Naive thymus-derived CD4-positive, alpha-beta T cell (primary cell): ENCODE measurements at regions of chr21 and their contacts with region 1.

Region 1: DNA sequence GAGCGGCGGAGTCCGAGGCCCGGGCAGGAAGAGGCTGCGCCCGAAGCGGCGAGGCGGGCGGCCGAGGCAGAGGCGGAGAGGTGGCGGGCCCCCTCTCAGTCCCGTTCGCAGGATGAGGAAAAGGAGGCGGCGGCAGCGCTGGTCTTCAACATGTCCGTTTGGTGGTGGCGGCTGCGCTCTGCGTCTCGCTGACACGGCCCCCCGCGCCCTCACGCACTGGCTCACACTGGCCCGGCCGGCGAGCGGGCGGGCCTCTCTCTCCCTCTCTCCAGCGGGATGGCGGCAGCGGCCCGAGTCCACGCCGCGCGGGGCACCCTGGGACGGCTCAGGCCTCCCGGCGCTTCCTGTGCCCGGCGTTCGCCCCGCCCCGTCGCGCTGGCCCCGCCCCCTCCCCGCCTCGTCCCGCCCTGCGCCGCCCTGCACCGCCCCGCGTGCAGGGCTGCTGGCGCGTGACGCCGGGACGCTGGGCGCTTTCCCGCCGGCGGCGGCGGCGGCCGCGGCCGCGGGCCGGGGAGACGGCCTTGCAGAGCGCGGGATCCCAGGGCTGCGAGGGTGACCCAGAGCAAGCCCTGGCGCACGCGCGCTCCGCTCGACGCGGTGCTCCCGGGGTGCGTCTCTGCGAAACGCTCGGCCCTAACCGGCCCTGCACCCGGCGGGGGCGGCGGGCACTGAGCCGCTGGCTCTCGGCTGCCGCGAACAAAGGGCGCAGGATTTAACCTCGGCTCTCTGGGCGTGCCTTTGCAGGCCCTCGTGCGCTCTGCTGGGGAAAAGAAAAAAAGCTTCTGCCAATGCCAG is at the start of gene SCAF4:
- DNase-seq: peak; percentile 64 to 86 (median 72)
- ATAC-seq: peak; percentile 95
- H3K4me3 ChIP-seq: peak within 1 kb of the TSS; percentile 80
- H3K4me3 Mint-ChIP-seq: peak within 1 kb of the TSS in 6 of 10 donors; percentile 67 to 94 (median 90)
- H3K27ac ChIP-seq: peak within 1 kb of the TSS; percentile 95
- H3K27ac Mint-ChIP-seq: peak within 1 kb of the TSS; percentile 32 to 96 (median 83)
- H3K4me1 ChIP-seq: peaks cover 24 to 39% of the 10 kb centered on the region in 2 donors
- H3K4me1 Mint-ChIP-seq: peaks cover 13 to 19% (median 15%) of the 10 kb centered on the region in 7 donors
- H3K27me3 ChIP-seq: no peaks in the 10 kb centered on the region
- H3K27me3 Mint-ChIP-seq: peaks cover 0 to 2% (median 0%) of the 10 kb centered on the region in 5 donors
- total RNA-seq, gene SCAF4: 54.8 to 69.7 (median 64.7) TPM

Region 2: DNA sequence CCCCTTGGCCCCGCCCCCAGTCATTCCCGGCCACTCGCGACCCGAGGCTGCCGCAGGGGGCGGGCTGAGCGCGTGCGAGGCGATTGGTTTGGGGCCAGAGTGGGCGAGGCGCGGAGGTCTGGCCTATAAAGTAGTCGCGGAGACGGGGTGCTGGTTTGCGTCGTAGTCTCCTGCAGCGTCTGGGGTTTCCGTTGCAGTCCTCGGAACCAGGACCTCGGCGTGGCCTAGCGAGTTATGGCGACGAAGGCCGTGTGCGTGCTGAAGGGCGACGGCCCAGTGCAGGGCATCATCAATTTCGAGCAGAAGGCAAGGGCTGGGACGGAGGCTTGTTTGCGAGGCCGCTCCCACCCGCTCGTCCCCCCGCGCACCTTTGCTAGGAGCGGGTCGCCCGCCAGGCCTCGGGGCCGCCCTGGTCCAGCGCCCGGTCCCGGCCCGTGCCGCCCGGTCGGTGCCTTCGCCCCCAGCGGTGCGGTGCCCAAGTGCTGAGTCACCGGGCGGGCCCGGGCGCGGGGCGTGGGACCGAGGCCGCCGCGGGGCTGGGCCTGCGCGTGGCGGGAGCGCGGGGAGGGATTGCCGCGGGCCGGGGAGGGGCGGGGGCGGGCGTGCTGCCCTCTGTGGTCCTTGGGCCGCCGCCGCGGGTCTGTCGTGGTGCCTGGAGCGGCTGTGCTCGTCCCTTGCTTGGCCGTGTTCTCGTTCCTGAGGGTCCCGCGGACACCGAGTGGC is 72.3 kb before region 1 on chr21 and contains the start of gene SOD1:
- CTCF ChIA-PET with region 1: no interaction called
- POLR2A ChIA-PET with region 1: interaction called, 3 read pairs
- intact Hi-C with region 1: loop called (anchors 1 kb)
- DNase-seq: peak in 8 of 9 donors; percentile 20 to 98 (median 97)
- ATAC-seq: peak; percentile 97
- H3K4me3 ChIP-seq: peak within 1 kb of the TSS; percentile 79
- H3K4me3 Mint-ChIP-seq: peak within 1 kb of the TSS; percentile 95 to 100 (median 100)
- H3K27ac ChIP-seq: peak within 1 kb of the TSS; percentile 88
- H3K27ac Mint-ChIP-seq: peak within 1 kb of the TSS; percentile 97 to 100 (median 98)
- H3K4me1 ChIP-seq: peaks cover 15 to 50% of the 10 kb centered on the region in 2 donors
- H3K4me1 Mint-ChIP-seq: peaks cover 40 to 80% (median 68%) of the 10 kb centered on the region in 7 donors
- H3K27me3 ChIP-seq: no peaks in the 10 kb centered on the region
- H3K27me3 Mint-ChIP-seq: no peaks in the 10 kb centered on the region
- total RNA-seq, gene SOD1: 110 to 218 (median 182) TPM

Region 3: GRCh38 chr21:31713973-31714740 is 17.8 kb before region 1 on chr21:
- CTCF ChIA-PET with region 1: no interaction called
- POLR2A ChIA-PET with region 1: no interaction called
- intact Hi-C with region 1: loop called in 1 of 2 experiments (anchors 2 kb)
- DNase-seq: no peak
- ATAC-seq: no peak
- H3K4me3 ChIP-seq: no peak overlapping the region
- H3K4me3 Mint-ChIP-seq: peak overlapping the region in 5 of 10 donors; percentile 0 to 46 (median 22)
- H3K27ac ChIP-seq: no peak overlapping the region
- H3K27ac Mint-ChIP-seq: peak overlapping the region in 2 of 9 donors; percentile 1 to 2
- H3K4me1 ChIP-seq: peaks cover 24 to 38% of the 10 kb centered on the region in 2 donors
- H3K4me1 Mint-ChIP-seq: peaks cover 37 to 99% (median 92%) of the 10 kb centered on the region in 7 donors
- H3K27me3 ChIP-seq: no peaks in the 10 kb centered on the region
- H3K27me3 Mint-ChIP-seq: no peaks in the 10 kb centered on the region

Region 4: DNA sequence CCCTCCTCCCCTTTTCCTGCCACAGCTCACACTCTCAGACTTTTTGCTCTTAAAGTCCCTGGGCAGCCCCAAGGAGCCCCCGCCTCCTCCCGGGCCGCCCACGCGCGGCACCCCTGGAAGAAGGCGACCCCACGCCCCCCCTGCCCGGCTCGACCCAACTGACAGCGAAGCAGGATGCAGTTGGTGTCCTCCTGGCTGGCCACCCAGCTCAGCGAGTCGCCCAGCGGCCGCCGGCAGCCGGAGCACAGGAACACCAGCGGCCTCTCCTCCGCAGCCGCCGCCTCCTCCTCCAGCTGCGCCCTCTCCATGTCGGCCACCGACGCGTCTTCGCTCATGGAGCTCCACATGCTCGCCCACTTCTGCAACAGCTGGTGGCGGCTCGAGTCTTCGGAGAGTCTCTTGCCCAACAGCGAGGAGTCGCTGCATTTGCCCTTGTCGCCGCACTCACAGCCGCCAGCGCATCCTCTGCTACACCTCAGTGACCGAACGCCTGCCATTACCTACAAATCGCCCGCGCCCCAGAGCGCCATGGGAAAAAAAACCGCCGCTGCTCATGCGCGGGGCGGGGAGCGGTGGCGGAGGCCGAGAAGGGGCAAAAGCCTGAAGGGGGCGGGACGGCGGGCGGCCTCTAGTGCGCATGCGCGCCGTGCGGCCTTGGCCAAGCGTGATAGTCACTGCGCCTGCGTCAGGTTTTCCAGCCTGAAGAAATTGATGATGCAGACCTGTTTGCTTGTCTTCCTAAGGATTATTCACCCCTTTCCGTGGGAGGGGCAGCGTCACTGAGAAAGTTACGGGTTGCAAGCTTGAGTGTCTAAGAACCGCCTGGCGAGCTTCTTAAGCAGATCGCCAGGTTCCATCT is 546.7 kb after region 1 on chr21 and contains the start of gene MIS18A:
- CTCF ChIA-PET with region 1: no interaction called
- POLR2A ChIA-PET with region 1: no interaction called
- intact Hi-C with region 1: loop called (anchors 1 to 2 kb)
- DNase-seq: peak; percentile 92 to 98 (median 95)
- ATAC-seq: peak; percentile 97
- H3K4me3 ChIP-seq: peak within 1 kb of the TSS; percentile 90
- H3K4me3 Mint-ChIP-seq: peak within 1 kb of the TSS; percentile 95 to 100 (median 98)
- H3K27ac ChIP-seq: peak within 1 kb of the TSS; percentile 70
- H3K27ac Mint-ChIP-seq: peak within 1 kb of the TSS; percentile 90 to 97 (median 94)
- H3K4me1 ChIP-seq: peaks cover 14 to 16% of the 10 kb centered on the region in 2 donors
- H3K4me1 Mint-ChIP-seq: peaks cover 8 to 36% (median 33%) of the 10 kb centered on the region in 7 donors
- H3K27me3 ChIP-seq: no peaks in the 10 kb centered on the region
- H3K27me3 Mint-ChIP-seq: no peaks in the 10 kb centered on the region
- total RNA-seq, gene MIS18A: 3.3 to 16.4 (median 8.4) TPM

Region 5: DNA sequence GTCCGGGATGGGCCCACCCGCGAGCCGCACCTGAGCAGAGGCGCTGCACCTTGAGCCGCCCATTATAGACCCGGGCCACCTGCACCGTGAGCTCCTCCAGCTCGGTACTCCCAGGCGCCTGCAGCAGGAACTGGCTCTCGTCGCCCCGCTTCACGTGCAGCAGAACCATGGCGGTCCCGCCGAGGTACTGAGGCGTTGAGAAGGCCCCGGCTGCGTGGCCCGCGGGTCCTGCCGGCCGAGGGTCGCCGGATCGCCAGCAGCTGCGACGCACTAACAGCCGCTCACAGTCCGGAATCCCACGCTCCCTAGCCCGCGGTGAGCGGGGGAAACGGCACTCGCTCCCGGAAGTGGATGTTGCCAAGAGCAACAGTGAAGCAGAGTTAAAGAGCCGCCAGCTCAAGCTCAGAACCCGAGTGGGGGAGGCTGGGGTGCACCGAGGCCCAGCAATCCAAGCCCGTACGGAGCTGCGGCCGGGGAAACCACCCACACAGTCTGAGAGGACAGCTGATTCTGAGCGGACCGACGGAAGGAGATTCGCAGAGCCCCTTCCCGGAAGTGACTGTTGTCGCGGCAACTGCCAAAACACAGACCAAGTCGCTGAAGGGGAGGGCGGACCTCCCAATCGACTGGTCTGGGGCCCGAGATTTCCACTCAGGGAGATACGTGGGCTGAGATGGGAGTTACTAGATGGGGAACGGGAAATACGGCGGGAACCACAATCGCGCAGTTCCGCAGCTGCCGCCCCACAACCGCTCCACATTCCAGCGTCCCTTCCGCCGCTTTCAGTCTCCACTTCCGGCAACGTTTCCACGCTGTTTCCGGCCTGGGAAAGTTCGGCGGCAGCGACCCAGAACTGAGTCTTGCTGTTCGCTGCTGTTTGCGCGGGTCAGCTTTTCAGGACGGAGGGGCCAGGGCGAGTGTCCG is 880.3 kb after region 1 on chr21 and contains the start of gene CFAP298:
- CTCF ChIA-PET with region 1: no interaction called
- POLR2A ChIA-PET with region 1: no interaction called
- intact Hi-C with region 1: loop called (anchors 2 to 5 kb)
- DNase-seq: peak; percentile 78 to 93 (median 89)
- ATAC-seq: peak; percentile 97
- H3K4me3 ChIP-seq: peak within 1 kb of the TSS; percentile 100
- H3K4me3 Mint-ChIP-seq: peak within 1 kb of the TSS; percentile 95 to 98 (median 97)
- H3K27ac ChIP-seq: peak within 1 kb of the TSS; percentile 87
- H3K27ac Mint-ChIP-seq: peak within 1 kb of the TSS; percentile 90 to 98 (median 97)
- H3K4me1 ChIP-seq: peaks cover 12% of the 10 kb centered on the region in 2 donors
- H3K4me1 Mint-ChIP-seq: peaks cover 0 to 34% (median 12%) of the 10 kb centered on the region in 7 donors
- H3K27me3 ChIP-seq: no peaks in the 10 kb centered on the region
- H3K27me3 Mint-ChIP-seq: peaks cover 0 to 15% (median 0%) of the 10 kb centered on the region in 5 donors
- total RNA-seq, gene CFAP298: 16.8 to 34.5 (median 31.3) TPM